Psoas muscle (tissue), 8 donors: ENCODE measurements at regions of chr1 and their contacts with region 1.

Region 1: GRCh38 chr1:182962554-182963115 is 9.7 kb upstream of the SHCBP1L start:
- DNase-seq: peak; percentile 77 to 88
- ATAC-seq: peak; percentile 100
- H3K4me3 ChIP-seq: peak overlapping the region; percentile 53
- H3K27ac ChIP-seq: peak overlapping the region; percentile 61
- H3K4me1 ChIP-seq: peaks cover 5% of the 10 kb centered on the region
- H3K27me3 ChIP-seq: no peaks in the 10 kb centered on the region
- CTCF ChIP-seq: peak; percentile 96

Region 2: DNA sequence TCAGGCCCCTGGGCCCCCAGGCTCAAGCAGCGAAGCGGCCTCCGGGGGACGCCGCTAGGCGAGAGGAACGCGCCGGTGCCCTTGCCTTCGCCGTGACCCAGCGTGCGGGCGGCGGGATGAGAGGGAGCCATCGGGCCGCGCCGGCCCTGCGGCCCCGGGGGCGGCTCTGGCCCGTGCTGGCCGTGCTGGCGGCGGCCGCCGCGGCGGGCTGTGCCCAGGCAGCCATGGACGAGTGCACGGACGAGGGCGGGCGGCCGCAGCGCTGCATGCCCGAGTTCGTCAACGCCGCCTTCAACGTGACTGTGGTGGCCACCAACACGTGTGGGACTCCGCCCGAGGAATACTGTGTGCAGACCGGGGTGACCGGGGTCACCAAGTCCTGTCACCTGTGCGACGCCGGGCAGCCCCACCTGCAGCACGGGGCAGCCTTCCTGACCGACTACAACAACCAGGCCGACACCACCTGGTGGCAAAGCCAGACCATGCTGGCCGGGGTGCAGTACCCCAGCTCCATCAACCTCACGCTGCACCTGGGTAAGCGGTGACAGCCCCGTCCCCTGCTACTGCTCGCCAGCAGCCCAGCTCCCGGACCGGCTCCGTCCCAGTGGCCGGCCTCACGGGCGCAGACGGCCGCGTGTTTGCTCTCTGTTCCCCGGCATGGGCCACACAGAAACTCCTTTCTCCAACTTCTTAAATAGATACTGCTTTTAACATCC is 61.1 kb after region 1 on chr1:
- intact Hi-C with region 1: loop called (anchors 2 to 5 kb)
- DNase-seq: peak; percentile 65 to 83
- ATAC-seq: peak; percentile 55 to 63 (median 59)
- H3K4me3 ChIP-seq: peak overlapping the region; percentile 89
- H3K27ac ChIP-seq: peak overlapping the region; percentile 100
- H3K4me1 ChIP-seq: peaks cover 55% of the 10 kb centered on the region
- H3K27me3 ChIP-seq: no peaks in the 10 kb centered on the region
- CTCF ChIP-seq: peak; percentile 51

Region 3: DNA sequence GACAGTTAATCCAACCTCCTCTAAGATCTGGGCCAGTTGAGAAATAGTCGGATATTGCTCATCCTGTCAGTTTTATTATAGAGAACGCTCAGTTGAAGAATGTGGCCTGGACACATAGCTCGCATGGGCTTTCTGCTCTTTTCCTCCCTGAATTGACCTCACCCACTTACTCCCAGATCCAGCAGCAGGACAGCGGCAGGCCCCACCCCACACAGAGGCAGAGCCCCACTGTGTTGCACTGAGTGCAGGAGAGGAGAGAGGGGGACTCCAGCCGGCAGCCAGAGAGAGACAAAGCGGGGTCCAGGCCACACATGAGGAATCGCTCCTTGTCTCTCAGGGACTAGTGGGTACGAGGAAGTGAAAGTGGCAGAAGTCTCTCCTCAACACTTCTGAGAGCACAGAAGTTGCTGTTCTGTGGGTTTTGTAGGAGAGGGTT is 139.2 kb after region 1 on chr1:
- intact Hi-C with region 1: loop called (anchors 5 kb)
- DNase-seq: peak in 1 of 2 donors; percentile 25
- ATAC-seq: peak; percentile 2 to 38 (median 24)
- H3K4me3 ChIP-seq: no peak overlapping the region
- H3K27ac ChIP-seq: peak overlapping the region; percentile 84
- H3K4me1 ChIP-seq: peaks cover 74% of the 10 kb centered on the region
- H3K27me3 ChIP-seq: no peaks in the 10 kb centered on the region
- CTCF ChIP-seq: no peak

Region 4: DNA sequence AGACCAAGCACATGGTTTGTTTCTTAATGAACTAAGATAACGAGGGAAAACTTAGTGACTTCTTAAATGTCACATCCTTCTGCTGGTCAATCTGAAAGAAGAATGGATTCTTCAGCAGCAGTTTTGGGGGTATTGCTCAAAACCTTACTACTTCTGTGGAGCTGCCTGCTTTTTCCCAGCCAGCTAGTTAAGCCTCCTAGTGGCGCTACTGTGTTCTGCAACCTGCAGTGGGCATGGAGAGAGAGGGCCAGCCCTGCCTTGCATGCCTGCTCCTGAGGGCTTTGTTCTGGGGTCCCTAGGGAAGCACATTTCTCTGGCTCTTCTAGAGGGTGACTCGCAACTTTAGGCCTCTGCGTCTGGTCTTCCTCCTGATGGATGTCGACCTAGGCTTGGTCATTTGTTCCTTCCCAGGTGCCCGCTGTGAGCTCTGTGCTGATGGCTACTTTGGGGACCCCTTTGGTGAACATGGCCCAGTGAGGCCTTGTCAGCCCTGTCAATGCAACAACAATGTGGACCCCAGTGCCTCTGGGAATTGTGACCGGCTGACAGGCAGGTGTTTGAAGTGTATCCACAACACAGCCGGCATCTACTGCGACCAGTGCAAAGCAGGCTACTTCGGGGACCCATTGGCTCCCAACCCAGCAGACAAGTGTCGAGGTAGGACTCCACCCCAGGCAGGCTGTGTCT is 265.5 kb after region 1 on chr1:
- intact Hi-C with region 1: loop called in 1 of 2 experiments (anchors 2 kb)
- DNase-seq: peak in 1 of 2 donors; percentile 45
- ATAC-seq: peak in 3 of 4 donors; percentile 59 to 73 (median 68)
- H3K4me3 ChIP-seq: no peak overlapping the region
- H3K27ac ChIP-seq: no peak overlapping the region
- H3K4me1 ChIP-seq: no peaks in the 10 kb centered on the region
- H3K27me3 ChIP-seq: no peaks in the 10 kb centered on the region
- CTCF ChIP-seq: peak; percentile 66

Region 5: DNA sequence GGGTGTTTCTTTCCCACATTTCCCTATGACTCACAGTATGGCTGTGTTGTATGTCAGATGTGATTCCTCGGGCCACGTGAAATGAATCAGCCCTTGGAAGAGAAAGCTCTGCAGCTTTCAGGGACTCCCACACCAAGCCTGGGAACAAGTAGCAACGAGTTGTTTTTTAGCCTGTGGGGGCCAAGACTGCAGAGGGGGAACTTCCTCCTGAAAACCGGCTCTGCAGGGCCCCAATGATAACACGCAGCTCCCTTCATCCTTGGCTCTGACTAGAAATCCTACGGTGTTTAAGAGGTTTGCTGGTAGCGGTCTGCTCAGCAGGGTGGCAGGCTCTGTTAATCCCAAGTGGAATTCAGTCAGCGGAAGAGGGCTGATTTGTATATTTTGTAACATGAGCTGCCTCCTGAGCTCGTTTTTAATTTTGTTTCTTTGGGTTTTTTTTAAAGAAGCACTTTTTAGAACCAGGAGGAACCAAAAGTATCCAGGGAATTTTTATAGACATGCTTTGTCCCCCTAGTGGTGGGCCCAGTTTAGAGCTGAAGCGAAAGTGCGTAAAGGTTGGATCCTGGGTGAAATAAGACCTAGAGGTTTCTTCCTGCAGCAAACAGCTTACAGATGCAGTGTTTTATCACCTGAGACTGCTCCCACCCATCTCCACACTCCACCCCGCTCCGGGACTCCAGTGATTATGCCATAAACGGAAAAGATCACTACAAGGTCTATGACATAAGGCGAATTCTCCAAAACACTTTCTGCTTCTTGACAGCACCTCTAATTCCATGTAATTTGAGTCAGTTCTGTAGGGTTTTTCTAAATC is 272.2 kb after region 1 on chr1:
- intact Hi-C with region 1: loop called in 1 of 2 experiments (anchors 5 kb)
- DNase-seq: peak; percentile 62 to 79
- ATAC-seq: peak; percentile 94 to 97 (median 94)
- H3K4me3 ChIP-seq: peak overlapping the region; percentile 57
- H3K27ac ChIP-seq: peak overlapping the region; percentile 76
- H3K4me1 ChIP-seq: peaks cover 6% of the 10 kb centered on the region
- H3K27me3 ChIP-seq: peaks cover 0 to 3% (median 0%) of the 10 kb centered on the region in 3 donors
- CTCF ChIP-seq: peak; percentile 65

Region 6: GRCh38 chr1:183318433-183318832 is 355.8 kb after region 1 on chr1:
- intact Hi-C with region 1: loop called in 1 of 2 experiments (anchors 10 kb)
- DNase-seq: peak; percentile 73 to 81
- ATAC-seq: peak; percentile 94 to 98 (median 97)
- H3K4me3 ChIP-seq: no peak overlapping the region
- H3K27ac ChIP-seq: no peak overlapping the region
- H3K4me1 ChIP-seq: peaks cover 9% of the 10 kb centered on the region
- H3K27me3 ChIP-seq: no peaks in the 10 kb centered on the region
- CTCF ChIP-seq: peak; percentile 56

Region 7: GRCh38 chr1:183655562-183656075 is 693.0 kb after region 1 on chr1:
- intact Hi-C with region 1: no loop called
- DNase-seq: peak; percentile 73 to 84
- ATAC-seq: peak; percentile 71 to 91 (median 80)
- H3K4me3 ChIP-seq: no peak overlapping the region
- H3K27ac ChIP-seq: no peak overlapping the region
- H3K4me1 ChIP-seq: no peaks in the 10 kb centered on the region
- H3K27me3 ChIP-seq: no peaks in the 10 kb centered on the region
- CTCF ChIP-seq: peak; percentile 95